Mammary epithelial cell (primary cell): ENCODE measurements at regions of chr1 and their contacts with region 1.

Region 1: GRCh38 chr1:98794196-98794886 is 132.8 kb downstream of the SNX7 start:
- DNase-seq: peak; percentile 60
- H3K4me3 ChIP-seq: no peak overlapping the region
- H3K27ac ChIP-seq: no peak overlapping the region
- H3K4me1 ChIP-seq: no peaks in the 10 kb centered on the region
- H3K27me3 ChIP-seq: peaks cover 2% of the 10 kb centered on the region
- CTCF ChIP-seq: peak; percentile 78 to 82

Region 2: GRCh38 chr1:99170516-99170915 is 376.2 kb after region 1 on chr1:
- CTCF ChIA-PET with region 1: interaction called, 7 read pairs
- dilution Hi-C with region 1: no loop called
- in situ Hi-C with region 1: no loop called
- intact Hi-C with region 1: loop called (anchors 5 kb)
- DNase-seq: peak; percentile 46
- H3K4me3 ChIP-seq: no peak overlapping the region
- H3K27ac ChIP-seq: no peak overlapping the region
- H3K4me1 ChIP-seq: no peaks in the 10 kb centered on the region
- H3K27me3 ChIP-seq: no peaks in the 10 kb centered on the region
- CTCF ChIP-seq: no peak